ENCODE measurements at regions of chr9 and their contacts with region 1.

Region 1: DNA sequence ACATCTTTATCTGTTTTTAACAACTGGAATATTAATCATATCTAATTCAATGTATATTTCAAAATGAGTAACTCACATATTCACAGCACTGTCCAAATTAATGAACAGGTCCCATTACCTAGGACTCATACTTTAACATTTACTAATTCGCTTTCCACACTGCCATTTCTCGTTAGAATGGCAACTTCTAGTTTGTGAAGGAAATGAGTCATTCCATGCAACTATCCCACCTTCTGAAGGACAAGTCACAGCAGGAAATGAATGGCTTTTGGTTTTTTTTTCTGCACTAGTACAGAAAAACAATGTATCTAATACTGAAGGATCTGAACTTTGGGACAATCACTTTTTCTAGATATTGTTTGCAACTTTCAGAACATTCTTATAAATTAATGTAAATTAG is 24.6 kb upstream of the IFNK start:
- DNase-seq: peak; percentile 91
- H3K4me3 ChIP-seq: peak overlapping the region in 2 of 3 experiments; percentile 15 to 23
- H3K27ac ChIP-seq: peak overlapping the region; percentile 86
- H3K4me1 ChIP-seq: peaks cover 48% of the 10 kb centered on the region
- H3K27me3 ChIP-seq: no peaks in the 10 kb centered on the region
- CTCF ChIP-seq: no peak

Region 2: GRCh38 chr9:26955921-26956859 is 543.3 kb before region 1 on chr9 and contains the start of gene IFT74:
- CTCF ChIA-PET with region 1: no interaction called
- dilution Hi-C with region 1: no loop called
- in situ Hi-C with region 1: no loop called
- intact Hi-C with region 1: no loop called
- DNase-seq: peak; percentile 96
- H3K4me3 ChIP-seq: peak within 1 kb of the TSS; percentile 64 to 78 (median 69)
- H3K27ac ChIP-seq: peak within 1 kb of the TSS; percentile 88
- H3K4me1 ChIP-seq: peaks cover 4% of the 10 kb centered on the region
- H3K27me3 ChIP-seq: no peaks in the 10 kb centered on the region
- CTCF ChIP-seq: no peak
- total RNA-seq, gene IFT74: 12.3 to 19.2 TPM

Region 3: DNA sequence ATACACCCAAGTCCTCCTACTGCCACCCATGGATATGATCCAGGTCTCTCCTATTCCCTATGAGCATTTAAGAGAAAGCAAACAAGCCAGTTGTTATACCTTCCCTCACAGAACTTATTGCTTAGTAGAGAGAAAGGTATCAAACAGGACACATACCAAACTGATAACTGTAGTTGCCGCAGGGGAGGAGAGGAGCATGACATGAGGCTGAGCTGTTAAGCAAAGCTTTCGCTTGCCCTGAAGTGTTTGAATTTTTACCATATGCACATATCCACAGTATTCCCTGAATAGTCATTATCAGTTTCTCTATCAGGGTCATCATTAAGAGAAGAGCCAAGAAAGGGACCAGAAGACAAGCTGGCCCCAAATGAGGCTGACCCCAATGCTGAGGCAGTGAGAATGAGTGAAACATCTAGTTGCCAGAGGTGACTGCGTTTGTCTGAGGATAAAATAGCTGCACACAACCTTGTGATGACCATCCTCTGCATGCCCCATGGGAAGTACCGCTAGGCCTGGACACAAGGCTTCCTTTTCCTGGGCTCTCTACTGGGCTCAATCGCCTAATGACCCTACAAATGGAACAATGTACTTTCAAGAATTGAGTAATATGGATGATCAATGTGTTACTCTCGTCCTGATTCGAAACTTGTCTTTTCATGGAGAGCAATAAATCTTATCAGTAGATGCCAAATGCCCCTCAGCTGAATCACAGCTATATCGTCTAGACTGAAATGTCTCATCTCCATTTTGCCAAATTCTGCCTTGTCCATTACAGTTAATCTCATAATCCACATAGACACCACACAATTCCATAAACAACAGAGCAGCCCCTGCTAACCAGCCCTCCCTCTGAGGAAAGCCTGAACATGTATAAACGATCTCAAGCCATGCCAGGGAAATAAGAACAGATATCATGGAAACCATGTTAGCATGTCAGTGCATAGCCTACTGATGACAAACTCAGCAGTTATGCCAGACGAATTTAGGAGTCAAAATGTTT is 20.3 kb after region 1 on chr9:
- CTCF ChIA-PET with region 1: no interaction called
- dilution Hi-C with region 1: no loop called
- in situ Hi-C with region 1: no loop called
- intact Hi-C with region 1: loop called (anchors 1 kb)
- DNase-seq: peak; percentile 91
- H3K4me3 ChIP-seq: no peak overlapping the region
- H3K27ac ChIP-seq: peak overlapping the region; percentile 92
- H3K4me1 ChIP-seq: peaks cover 51% of the 10 kb centered on the region
- H3K27me3 ChIP-seq: no peaks in the 10 kb centered on the region
- CTCF ChIP-seq: no peak

Region 4: DNA sequence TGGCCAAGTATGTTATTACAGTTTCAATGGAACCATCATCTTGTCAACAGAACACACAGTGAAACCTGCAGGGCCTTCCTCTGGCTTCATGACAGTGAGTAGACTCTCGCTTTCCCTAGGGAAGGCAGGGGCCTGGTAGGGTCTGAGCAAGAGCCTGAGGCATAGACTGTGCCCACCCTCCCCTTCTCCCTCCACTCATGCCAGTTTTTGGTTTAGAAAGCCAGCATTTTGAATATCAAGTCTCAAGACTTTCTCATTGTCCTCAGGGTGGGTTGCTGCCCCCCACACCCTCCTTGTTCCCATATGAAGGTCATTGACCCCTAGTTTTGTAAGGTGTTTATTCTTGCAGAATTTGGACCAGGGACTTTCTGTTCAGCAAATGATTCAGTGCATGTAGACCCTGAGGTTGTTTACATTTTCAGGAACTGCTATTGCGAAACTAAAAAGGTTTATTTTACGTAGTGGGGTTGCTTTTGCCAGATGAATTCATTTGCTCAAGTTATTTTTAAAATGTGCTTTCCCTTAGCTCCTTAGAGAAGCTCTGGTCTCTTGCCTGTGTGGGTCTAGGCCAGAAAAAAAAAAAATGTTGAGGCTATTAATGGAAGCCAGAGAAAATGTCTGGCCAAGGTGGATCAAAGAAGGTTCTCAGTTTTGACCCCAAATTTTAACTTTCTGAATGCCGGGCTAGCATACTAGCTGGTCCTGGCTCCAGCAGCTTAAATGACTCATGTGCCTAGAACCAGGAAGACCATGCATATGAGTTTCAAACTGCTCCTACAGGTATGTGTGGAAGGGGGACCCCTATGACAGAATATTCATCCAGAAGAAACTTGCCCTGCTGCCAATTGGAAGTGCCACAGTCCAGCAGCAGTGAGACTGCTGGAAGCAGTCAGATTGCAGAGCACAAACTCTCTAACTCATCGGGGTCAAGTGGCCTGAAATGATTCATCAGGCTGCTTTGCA is 40.3 kb after region 1 on chr9:
- CTCF ChIA-PET with region 1: no interaction called
- dilution Hi-C with region 1: no loop called
- in situ Hi-C with region 1: no loop called
- intact Hi-C with region 1: no loop called
- DNase-seq: peak; percentile 45
- H3K4me3 ChIP-seq: no peak overlapping the region
- H3K27ac ChIP-seq: no peak overlapping the region
- H3K4me1 ChIP-seq: peaks cover 10% of the 10 kb centered on the region
- H3K27me3 ChIP-seq: no peaks in the 10 kb centered on the region
- CTCF ChIP-seq: no peak